Activated T-helper 2 cell treated with anti-CD3 and anti-CD28 coated beads, Interferon-gamma antibody, Interleukin-2, Interleukin-4, amounts not matched to agents 10 μg/mL and 5 μg/mL and 100 μg/mL, durations not matched to agents 14 hours and 24 hours and 36 hours (primary cell): ENCODE measurements at regions of chr2 and their contacts with region 1.

Region 1: DNA sequence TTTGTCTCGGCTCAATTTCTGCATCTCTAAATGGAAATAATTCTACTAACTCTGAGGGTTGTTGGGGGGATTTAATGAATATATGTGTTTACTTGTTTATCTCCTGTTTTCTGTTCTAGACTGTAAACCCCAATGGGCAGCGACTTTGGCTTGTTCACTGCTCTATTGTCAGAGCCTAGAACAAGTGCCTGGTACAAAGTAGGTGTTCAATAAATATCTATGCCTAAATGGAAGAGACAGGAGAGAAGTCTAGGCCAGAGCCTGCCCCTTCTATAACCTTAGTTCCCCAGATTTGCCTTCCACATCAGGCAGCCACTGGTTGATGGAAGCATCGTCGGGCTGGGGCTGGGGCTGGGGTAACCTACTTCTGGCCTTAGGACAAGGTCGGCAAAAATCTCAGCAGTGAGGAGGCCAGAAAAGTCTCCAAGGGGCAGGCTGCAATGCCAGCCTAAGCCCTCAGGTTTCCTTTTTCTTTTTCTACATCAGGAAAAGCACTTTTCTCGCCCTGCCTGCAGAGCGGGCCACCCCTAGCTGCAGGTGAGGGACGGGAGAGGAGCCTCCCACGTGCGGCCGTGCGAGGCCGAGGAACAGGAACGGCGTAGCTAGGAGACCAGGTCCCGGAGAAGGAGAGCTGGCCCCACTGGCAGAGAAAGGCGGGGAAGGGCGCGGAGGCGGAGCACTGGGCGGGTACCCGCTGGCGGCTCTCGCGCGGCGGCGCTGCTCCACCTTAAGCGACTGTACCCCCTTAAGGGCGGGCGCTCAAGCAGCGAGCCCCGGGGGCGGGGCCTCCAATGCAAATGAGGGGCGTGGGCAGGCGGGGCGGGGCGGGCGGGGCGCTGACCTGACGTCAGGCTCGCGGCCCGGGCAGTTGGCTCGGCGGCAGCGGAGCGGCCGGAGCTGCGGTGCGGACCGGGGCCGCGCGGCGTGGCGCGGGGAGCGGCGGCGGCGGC is at the start of gene CNNM4:
- DNase-seq: peak; percentile 88
- H3K4me3 Mint-ChIP-seq: peak within 1 kb of the TSS; percentile 80
- H3K27ac Mint-ChIP-seq: peak within 1 kb of the TSS; percentile 79
- H3K4me1 Mint-ChIP-seq: peaks cover 44% of the 10 kb centered on the region
- H3K27me3 Mint-ChIP-seq: no peaks in the 10 kb centered on the region
- total RNA-seq, gene CNNM4: 10.1 and 11.3 TPM in 2 replicates

Region 2: DNA sequence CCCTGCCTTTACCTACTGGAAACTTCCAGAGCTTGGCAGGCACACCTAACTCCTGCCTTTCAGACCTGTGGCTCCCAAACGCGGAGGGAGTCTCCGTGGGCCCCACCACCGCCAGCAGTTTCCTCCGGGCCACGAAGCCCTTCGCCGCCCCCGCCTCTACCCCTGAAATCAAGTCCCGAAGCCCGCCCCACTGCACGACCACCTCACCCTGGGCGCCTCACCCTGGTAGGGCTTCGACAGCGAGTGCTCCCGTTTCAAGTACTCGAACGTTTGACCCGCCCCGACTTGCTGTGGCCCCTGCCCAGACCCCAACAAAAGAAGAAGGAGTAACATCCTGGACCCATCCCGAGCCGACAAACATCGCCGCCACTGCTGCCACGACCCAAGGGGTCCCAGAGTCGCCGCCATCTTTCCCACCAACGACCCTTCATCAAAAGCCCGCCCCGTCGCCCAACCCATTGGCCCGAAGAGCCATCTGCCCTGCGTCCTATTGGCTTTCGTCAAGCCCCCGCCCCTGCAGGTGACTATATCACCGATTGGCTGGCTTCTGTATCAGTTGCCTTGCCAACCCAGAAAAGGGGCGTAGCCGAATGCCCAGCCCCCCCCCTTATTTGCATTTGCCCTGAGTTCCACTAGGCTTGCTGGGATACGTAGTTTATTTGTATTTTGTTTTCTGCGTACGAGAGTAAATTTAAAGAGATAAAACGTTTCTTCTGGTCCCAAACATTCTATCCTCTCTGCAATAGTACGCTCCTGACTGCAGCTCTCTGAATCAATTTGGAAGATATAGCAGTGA is 20.5 kb before region 1 on chr2 and contains the start of gene LMAN2L:
- intact Hi-C with region 1: loop called (anchors 1 kb)
- DNase-seq: peak; percentile 95
- H3K4me3 Mint-ChIP-seq: peak within 1 kb of the TSS; percentile 92
- H3K27ac Mint-ChIP-seq: peak within 1 kb of the TSS; percentile 71
- H3K4me1 Mint-ChIP-seq: peaks cover 20% of the 10 kb centered on the region
- H3K27me3 Mint-ChIP-seq: peaks cover 2% of the 10 kb centered on the region
- total RNA-seq, gene LMAN2L: 6.0 and 7.0 TPM in 2 replicates

Region 3: DNA sequence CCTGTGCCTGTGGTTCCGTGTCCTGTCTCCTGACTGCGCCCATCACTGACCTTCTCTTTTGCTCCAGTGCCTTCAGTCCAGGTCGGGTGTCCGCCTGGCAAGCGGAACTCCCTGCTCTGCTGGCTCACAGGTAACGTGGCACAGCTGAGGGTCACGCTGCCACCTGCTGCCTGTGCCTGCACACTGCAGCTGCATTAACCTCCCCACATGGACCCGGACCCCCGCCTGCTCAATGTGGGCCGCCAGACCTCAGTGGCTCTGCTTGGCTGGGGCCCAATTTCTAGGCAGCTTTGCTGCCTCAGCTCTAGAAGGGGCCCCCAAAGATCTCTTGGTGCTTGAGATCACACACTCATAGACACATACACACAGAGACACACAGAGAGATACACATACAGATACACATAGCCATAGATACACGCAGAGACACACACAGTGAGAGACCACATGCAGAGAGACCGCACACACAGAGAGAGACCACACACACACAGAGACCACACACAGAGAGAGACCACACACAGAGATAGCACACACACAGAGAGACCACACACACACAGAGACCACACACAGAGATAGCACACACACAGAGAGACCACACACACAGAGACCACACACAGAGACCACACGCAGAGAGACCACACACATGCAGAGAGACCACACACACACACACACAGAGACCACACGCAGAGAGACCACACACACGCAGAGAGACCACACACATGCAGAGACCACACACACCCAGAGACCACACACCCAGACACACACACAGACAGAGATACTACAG is 40.9 kb after region 1 on chr2:
- intact Hi-C with region 1: loop called (anchors 5 kb)
- DNase-seq: peak; percentile 53
- H3K4me3 Mint-ChIP-seq: no peak overlapping the region
- H3K27ac Mint-ChIP-seq: no peak overlapping the region
- H3K4me1 Mint-ChIP-seq: peaks cover under 1% of the 10 kb centered on the region
- H3K27me3 Mint-ChIP-seq: no peaks in the 10 kb centered on the region

Region 4: DNA sequence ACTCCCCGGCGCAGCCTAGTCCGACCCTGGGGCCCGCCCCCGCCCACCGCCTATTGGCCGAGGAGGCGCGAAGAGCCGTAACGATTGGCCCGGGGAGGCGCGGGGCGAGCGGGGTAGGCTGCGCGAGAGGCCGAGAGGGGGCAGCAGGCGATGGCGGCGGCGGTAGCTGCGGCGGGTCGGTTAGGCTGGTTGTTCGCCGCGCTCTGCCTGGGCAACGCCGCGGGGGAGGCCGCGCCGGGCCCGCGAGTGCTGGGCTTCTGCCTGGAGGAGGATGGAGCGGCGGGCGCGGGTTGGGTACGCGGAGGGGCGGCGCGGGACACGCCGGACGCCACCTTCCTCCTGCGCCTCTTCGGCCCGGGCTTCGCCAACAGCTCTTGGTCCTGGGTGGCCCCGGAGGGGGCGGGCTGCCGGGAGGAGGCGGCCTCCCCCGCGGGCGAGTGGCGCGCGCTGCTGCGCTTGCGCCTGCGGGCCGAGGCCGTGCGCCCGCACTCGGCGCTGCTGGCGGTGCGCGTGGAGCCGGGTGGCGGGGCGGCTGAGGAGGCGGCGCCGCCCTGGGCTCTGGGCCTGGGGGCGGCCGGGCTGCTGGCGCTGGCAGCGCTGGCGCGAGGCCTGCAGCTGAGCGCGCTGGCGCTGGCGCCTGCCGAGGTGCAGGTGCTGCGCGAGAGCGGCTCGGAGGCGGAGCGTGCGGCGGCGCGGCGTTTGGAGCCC is 56.0 kb after region 1 on chr2 and contains the start of gene CNNM3:
- intact Hi-C with region 1: loop called (anchors 1 kb)
- DNase-seq: peak; percentile 95
- H3K4me3 Mint-ChIP-seq: peak within 1 kb of the TSS; percentile 84
- H3K27ac Mint-ChIP-seq: peak within 1 kb of the TSS; percentile 70
- H3K4me1 Mint-ChIP-seq: peaks cover 41% of the 10 kb centered on the region
- H3K27me3 Mint-ChIP-seq: no peaks in the 10 kb centered on the region
- total RNA-seq, gene CNNM3: 28.7 and 30.4 TPM in 2 replicates

Region 5: DNA sequence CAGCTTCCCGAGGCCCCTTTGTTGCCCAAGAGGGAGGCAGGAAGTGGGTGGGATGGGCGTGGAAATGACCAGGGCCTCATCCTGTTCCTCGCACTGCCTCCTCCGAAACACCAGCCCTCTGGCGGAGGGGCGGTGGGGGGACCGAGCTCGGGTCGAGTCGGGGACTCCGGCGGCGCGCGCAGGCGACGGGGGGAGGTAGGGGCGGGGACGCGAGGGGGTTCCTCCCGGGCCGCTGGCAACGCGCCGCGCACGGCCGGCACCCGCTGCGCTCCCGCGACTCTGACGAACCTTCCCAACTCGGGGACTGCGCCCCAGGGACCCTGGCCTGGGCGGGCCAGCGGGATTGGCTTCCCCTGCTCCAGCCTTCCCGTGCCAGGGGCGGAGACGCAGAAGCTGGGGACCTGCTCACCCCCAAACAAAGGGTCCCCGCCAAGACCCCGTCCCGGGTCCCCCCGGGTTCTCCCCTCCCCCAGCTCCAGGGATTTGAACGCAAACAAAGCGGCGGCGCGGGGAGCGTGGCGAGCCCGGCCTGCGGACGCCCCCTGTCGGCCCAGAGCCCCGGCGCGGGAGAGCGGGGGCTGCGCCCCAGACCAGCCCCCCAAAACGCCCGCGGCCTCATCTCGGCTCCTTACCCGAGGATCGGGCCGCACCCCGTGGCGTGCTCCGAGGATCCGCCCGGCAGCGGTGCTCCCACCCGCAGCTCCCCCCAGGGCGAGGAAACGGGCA is 108.4 kb after region 1 on chr2:
- intact Hi-C with region 1: loop called (anchors 2 kb)
- DNase-seq: peak; percentile 62
- H3K4me3 Mint-ChIP-seq: peak overlapping the region; percentile 84
- H3K27ac Mint-ChIP-seq: peak overlapping the region; percentile 77
- H3K4me1 Mint-ChIP-seq: peaks cover 19% of the 10 kb centered on the region
- H3K27me3 Mint-ChIP-seq: peaks cover 6% of the 10 kb centered on the region